Activated CD4-positive, alpha-beta T cell treated with anti-CD3 and anti-CD28 coated beads, Interleukin-2, amount 10 ng/mL, durations not matched to agents 24 days and 14 days (primary cell): ENCODE measurements at regions of chr2 and their contacts with region 1.

Region 1: DNA sequence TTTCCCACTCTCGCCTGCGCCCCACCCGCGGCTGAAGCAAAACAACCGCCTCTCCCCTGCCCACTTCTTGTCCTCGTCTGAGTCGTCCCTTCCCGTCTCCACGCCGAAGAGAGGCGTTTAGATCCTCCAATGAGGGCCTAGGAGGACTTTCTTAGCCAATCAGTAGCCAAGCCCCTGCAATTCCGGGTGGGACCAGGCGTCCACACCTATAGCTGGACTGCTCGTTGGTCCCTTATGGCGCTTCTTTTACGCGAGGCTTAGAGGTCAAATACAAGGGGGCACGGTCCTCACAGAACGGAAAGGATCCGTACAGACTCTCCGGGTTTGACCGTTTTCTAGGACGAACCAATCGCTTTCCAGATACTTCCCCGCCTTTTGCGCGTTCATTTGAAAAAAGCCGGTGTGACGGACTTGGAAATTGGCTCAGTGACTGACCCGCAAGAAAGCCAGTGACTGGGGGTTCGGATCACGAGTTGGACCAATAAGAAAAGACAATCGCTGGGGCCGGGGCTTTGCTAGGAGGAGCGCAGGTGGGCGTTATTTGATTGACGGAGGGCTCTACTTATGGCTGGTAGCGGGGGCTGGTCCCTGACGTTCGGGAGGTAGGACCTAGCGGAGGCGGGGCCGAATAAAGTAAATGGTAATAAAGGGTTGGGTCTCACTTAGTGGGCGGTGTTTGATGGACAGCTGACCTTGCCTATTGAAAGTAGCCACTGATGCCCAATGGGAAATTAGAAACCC is 565 bp upstream of the PPM1B start:
- DNase-seq: peak; percentile 98
- H3K4me3 Mint-ChIP-seq: peak overlapping the region; percentile 94
- H3K27ac Mint-ChIP-seq: peak overlapping the region; percentile 99
- H3K4me1 Mint-ChIP-seq: peaks cover 27% of the 10 kb centered on the region
- H3K27me3 Mint-ChIP-seq: no peaks in the 10 kb centered on the region

Region 2: DNA sequence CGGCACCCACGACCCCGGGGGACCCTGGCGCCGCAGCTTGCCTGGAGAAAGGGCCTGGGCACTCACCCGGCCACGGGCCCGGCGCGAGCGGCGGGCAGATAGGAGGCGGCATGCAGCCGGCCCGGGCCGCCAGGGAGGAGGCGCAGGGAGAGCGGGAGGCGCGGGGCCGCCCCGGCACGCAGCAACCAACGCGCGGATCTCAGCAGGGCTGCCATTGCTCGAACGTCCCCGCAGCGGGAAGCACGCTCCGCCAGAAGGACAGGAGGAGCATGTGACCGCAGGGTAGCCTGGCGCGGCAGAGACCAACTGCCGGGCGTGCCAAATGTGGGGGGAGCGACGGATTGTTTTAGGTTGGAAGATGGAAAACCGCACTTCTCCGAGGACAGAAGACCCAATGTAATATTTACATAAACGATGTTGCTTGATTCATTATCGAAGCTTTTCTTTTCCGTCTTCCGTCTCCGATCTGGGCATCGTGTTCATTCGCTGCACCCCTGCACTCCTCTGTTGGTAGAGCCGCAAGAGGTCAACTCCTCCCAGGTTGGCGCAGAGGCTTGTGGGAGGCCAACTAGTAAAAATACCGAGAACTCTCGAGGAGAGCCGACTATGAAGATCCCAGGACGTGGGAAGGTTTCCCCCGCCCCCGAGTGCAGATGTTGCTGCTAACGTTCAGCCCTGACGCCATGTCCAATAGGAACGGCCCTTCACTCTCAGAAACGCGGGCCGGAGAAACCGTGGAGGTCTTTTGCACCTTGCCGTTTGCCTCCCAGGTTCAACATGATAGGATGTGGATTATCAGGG is 172.2 kb before region 1 on chr2 and contains the start of gene LRPPRC:
- intact Hi-C with region 1: loop called (anchors 1 kb)
- DNase-seq: peak; percentile 96
- H3K4me3 Mint-ChIP-seq: peak within 1 kb of the TSS; percentile 96
- H3K27ac Mint-ChIP-seq: peak within 1 kb of the TSS; percentile 95
- H3K4me1 Mint-ChIP-seq: peaks cover 32% of the 10 kb centered on the region
- H3K27me3 Mint-ChIP-seq: peaks cover 5% of the 10 kb centered on the region
- total RNA-seq, gene LRPPRC: 173 and 179 TPM in 2 replicates

Region 3: GRCh38 chr2:44100351-44100750 is 67.8 kb before region 1 on chr2:
- intact Hi-C with region 1: no loop called
- DNase-seq: peak; percentile 63
- H3K4me3 Mint-ChIP-seq: no peak overlapping the region
- H3K27ac Mint-ChIP-seq: no peak overlapping the region
- H3K4me1 Mint-ChIP-seq: peaks cover 13% of the 10 kb centered on the region
- H3K27me3 Mint-ChIP-seq: no peaks in the 10 kb centered on the region

Region 4: GRCh38 chr2:44120428-44120827 is 47.7 kb before region 1 on chr2:
- intact Hi-C with region 1: loop called (anchors 1 kb)
- DNase-seq: peak; percentile 73
- H3K4me3 Mint-ChIP-seq: no peak overlapping the region
- H3K27ac Mint-ChIP-seq: no peak overlapping the region
- H3K4me1 Mint-ChIP-seq: peaks cover 7% of the 10 kb centered on the region
- H3K27me3 Mint-ChIP-seq: peaks cover 6% of the 10 kb centered on the region

Region 5: DNA sequence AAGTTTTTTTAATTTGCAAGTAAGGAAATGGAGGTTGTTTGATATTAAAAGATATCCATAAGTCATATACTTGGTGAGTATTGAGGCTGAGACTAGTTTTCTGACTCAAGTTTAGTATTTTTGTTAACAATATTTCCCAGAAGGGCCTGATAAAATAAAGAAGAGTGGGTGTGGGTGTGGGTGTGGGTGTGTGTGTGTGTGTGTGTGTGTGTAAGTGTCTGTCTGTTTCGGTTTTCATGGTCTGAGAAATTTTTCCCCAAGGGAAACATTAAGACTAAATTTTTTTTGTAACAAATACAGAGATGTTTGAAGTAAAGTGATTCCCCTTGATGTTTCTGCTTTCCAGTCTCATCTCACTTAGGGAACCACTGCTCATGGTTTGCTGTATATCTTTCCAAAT is 37.1 kb after region 1 on chr2:
- intact Hi-C with region 1: loop called (anchors 5 kb)
- DNase-seq: no peak
- H3K4me3 Mint-ChIP-seq: peak overlapping the region; percentile 14
- H3K27ac Mint-ChIP-seq: peak overlapping the region; percentile 16
- H3K4me1 Mint-ChIP-seq: peaks cover 16% of the 10 kb centered on the region
- H3K27me3 Mint-ChIP-seq: no peaks in the 10 kb centered on the region

Region 6: GRCh38 chr2:44361330-44362206 is 193.5 kb after region 1 on chr2 and contains the starts of genes CAMKMT and PREPL:
- intact Hi-C with region 1: loop called (anchors 1 kb)
- DNase-seq: peak; percentile 99
- H3K4me3 Mint-ChIP-seq: peak within 1 kb of the TSS; percentile 89
- H3K27ac Mint-ChIP-seq: peak within 1 kb of the TSS; percentile 100
- H3K4me1 Mint-ChIP-seq: peaks cover 31% of the 10 kb centered on the region
- H3K27me3 Mint-ChIP-seq: peaks cover 2% of the 10 kb centered on the region
- total RNA-seq, gene CAMKMT: 13.1 and 16.2 TPM in 2 replicates
- total RNA-seq, gene PREPL: 32.7 and 33.3 TPM in 2 replicates